HCT116 (cell line): ENCODE measurements at regions of chr7 and their contacts with region 1.

Region 1: GRCh38 chr7:35624299-35625186 is 70.4 kb downstream of the HERPUD2 start:
- DNase-seq: peak; percentile 23
- ATAC-seq: peak; percentile 91
- H3K4me3 ChIP-seq: no peak overlapping the region
- H3K27ac ChIP-seq: no peak overlapping the region
- H3K4me1 ChIP-seq: no peaks in the 10 kb centered on the region
- H3K27me3 ChIP-seq: no peaks in the 10 kb centered on the region
- CTCF ChIP-seq: peak; percentile 63 to 94 (median 80); a peak in 5 of 6 replicates
- POLR2A ChIP-seq: no peak
- RAD21 ChIP-seq: peak; percentile 86

Region 2: GRCh38 chr7:34048445-34048844 is 1576.1 kb before region 1 on chr7:
- CTCF ChIA-PET with region 1: no interaction called
- POLR2A ChIA-PET with region 1: no interaction called
- RAD21 ChIA-PET with region 1: no interaction called
- intact Hi-C with region 1: no loop called
- DNase-seq: no peak
- ATAC-seq: no peak
- H3K4me3 ChIP-seq: no peak overlapping the region
- H3K27ac ChIP-seq: no peak overlapping the region
- H3K4me1 ChIP-seq: no peaks in the 10 kb centered on the region
- H3K27me3 ChIP-seq: no peaks in the 10 kb centered on the region
- CTCF ChIP-seq: no peak
- POLR2A ChIP-seq: no peak
- RAD21 ChIP-seq: no peak

Region 3: DNA sequence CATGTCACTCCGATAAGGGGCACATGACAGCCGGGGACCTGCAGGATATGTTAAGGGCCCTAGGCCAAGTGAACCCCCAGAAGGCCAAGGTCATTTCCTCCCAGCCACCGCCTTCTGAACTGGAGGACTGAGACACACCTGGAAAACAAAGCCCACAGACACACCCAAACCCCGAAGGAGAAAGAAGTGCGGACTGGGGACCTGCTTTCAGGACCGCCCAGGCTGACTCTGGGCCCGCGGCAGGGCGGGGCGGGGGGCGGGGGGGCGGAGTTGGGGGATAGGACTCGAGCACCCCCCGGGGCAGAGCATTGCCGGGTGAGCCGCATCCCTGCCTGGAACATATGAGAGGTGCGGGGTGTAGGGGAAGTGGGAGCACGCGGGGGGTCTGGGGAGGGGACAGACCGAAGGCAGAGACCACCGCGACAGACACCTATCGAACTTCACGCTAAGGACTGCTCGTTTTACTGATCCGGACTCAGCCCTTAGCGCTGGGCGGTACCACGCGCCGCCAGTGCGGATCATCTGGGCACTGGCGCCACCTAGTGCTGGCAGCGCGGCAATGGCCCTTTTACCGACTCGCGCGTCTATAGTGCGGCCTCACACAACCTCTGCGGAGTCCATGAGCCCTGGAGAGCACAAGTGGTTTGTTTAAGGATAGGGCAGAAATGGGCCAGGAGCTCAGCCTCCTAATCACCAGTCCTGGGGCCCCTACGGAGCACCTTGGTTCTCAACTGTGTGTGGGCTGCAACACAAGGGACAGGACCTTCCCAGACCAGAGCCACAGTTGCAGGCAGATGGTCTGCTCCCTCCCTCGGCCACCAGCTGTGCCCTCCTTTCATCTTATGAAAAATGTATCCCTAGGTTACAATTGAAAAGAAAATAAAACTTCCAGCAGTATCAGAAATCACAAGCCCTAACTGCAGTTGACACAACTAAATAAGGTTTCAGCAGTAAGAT is 87.2 kb before region 1 on chr7:
- CTCF ChIA-PET with region 1: interaction called, 3 read pairs
- POLR2A ChIA-PET with region 1: no interaction called
- RAD21 ChIA-PET with region 1: no interaction called
- intact Hi-C with region 1: loop called (anchors 2 kb)
- DNase-seq: peak; percentile 53
- ATAC-seq: peak; percentile 99
- H3K4me3 ChIP-seq: peak overlapping the region; percentile 28 to 40
- H3K27ac ChIP-seq: no peak overlapping the region
- H3K4me1 ChIP-seq: peaks cover 0 to 11% of the 10 kb centered on the region in 2 experiments; a peak in 1 of 4 replicates
- H3K27me3 ChIP-seq: no peaks in the 10 kb centered on the region
- CTCF ChIP-seq: peak; percentile 78 to 92 (median 91)
- POLR2A ChIP-seq: no peak
- RAD21 ChIP-seq: peak; percentile 88

Region 4: DNA sequence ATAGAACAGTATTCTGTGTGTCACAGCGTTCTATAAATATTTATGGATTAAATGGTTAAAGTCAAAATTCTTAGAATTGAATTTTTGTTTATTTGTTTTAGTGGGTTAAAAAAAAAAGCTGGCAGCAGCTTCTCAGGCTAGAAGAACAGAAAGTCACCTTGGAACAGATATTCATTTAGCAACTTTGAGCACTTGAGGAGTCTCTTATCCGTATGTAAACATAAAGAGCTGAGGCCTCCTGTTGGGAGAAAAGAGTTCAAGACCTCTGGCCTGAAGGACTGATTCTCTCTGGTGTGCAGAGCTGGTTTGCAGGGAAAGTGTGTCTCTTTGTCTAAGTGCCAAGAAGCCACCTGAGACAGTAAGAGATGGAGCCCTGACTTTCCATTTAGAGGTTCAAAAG is 39.6 kb before region 1 on chr7:
- CTCF ChIA-PET with region 1: no interaction called
- POLR2A ChIA-PET with region 1: no interaction called
- RAD21 ChIA-PET with region 1: no interaction called
- intact Hi-C with region 1: no loop called
- DNase-seq: no peak
- ATAC-seq: no peak
- H3K4me3 ChIP-seq: no peak overlapping the region
- H3K27ac ChIP-seq: no peak overlapping the region
- H3K4me1 ChIP-seq: no peaks in the 10 kb centered on the region
- H3K27me3 ChIP-seq: no peaks in the 10 kb centered on the region
- CTCF ChIP-seq: no peak
- POLR2A ChIP-seq: no peak
- RAD21 ChIP-seq: no peak

Region 5: DNA sequence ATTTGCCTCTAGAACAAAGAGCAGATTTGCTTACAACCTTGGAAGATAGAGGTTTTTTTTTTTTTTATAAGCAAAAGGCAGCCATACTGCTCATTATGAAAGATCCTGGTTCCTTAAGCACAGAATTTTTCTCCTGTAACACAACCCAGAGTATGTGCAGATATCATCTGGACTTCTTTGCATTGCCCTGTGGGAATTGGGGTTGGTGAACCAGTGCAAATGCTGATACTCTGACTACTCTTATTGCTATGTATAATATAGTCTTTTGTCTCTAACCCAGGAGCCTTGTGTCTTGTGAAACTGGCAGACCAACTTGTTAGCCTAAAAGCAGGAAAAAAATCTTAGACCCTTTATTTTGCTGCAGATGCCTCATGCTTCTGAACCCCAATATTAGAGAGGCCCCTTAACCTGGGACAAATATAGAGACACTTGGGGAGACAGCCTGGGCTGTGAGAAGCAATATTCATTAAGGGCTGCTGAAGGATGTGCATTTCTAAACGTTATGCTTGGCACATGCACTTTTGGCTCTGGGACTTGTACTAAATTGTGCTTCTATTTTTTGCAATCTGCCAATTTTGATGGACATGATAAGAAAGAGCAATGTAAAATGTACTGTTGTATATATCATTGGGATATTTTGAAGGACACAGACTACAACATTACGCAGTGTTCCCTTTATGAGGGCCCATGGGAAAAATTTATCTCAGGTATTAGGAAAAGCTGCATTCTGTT is 844.0 kb after region 1 on chr7:
- CTCF ChIA-PET with region 1: no interaction called
- POLR2A ChIA-PET with region 1: no interaction called
- RAD21 ChIA-PET with region 1: no interaction called
- intact Hi-C with region 1: no loop called
- DNase-seq: no peak
- ATAC-seq: no peak
- H3K4me3 ChIP-seq: no peak overlapping the region
- H3K27ac ChIP-seq: no peak overlapping the region
- H3K4me1 ChIP-seq: no peaks in the 10 kb centered on the region
- H3K27me3 ChIP-seq: no peaks in the 10 kb centered on the region
- CTCF ChIP-seq: no peak
- POLR2A ChIP-seq: no peak
- RAD21 ChIP-seq: no peak